HEK293 (cell line): ENCODE measurements at regions of chr6 and their contacts with region 1.

Region 1: DNA sequence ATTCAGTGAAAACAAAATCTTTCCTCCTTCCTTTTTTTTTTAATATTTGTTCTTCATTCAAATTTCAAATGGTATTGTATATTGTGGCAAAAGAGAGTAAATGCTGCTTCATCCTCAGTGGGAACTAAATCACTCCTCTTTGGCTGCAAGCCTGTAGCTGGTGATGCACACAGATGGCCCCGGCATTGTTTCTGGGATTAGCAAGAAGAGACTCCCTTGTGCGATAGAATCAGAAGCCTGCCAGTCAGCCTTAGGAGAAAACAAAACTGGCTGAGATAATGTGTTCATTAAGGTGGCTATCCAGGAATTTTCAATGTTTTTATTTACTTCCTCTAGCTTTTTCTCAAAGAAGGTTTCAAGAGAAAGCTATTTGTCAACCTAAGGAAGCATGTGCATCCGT is 20.7 kb upstream of the ELOVL2 start:
- H3K4me3 ChIP-seq: no peak overlapping the region
- H3K27ac ChIP-seq: no peak overlapping the region
- H3K4me1 ChIP-seq: 0 out of 2 replicates have a peak, but pooled peaks cover 2% of the 10 kb centered on the region
- CTCF ChIP-seq: no peak

Region 2: DNA sequence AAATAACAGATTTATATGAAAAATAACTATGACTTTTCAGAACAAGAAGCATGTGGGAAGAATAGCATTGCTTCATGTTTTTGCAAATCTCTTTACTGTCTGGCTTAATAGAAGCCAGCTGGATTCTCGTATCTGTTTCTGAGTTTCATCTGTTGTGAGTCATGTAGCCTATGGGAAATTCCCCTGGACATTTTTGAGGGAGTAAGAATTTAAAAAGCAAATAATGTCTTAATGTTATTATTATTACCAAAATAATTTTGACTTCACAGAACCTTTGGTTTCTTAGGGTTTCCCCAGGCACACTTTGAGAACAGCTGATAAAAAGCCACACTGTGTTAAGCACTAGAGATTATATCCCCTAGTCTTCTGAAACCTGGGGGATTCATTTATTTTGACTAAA is 102.2 kb before region 1 on chr6:
- CTCF ChIA-PET with region 1: interaction called, 11 read pairs
- POLR2A ChIA-PET with region 1: no interaction called
- H3K4me3 ChIP-seq: no peak overlapping the region
- H3K27ac ChIP-seq: no peak overlapping the region
- H3K4me1 ChIP-seq: no peaks in the 10 kb centered on the region
- CTCF ChIP-seq: no peak

Region 3: DNA sequence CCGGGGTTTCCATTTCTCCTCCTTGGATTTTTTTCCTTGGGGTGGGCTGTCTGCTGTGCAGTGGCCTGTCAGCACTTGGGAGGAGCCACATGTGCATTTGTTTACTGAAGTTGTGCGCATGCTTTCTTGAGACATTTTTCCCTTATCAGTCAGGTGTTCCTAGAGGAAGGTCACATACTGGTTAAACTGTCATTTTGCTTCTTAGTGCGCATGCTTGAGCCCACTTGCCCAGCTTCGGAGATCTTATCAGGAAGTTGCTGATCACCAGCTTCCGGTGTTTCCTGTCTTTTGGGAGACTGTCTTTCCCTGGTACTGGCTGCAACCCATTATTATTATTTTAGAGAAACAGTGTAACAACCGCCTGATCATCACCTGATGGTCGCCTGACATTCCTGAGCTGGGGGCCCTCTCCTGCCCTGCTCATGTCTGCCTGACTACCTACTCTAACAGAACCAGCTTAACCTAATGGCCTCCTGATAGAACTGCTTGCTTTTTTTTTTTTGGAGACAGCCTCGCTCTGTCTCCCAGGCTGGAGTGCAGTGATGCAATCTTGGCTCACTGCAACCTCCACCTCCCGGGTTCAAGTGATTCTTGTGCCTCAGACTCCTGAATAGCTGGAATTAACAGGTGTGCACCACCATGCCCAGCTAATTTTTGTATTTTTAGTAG is 47.1 kb after region 1 on chr6:
- CTCF ChIA-PET with region 1: no interaction called
- POLR2A ChIA-PET with region 1: no interaction called
- H3K4me3 ChIP-seq: no peak overlapping the region
- H3K27ac ChIP-seq: no peak overlapping the region
- H3K4me1 ChIP-seq: peaks cover 4% of the 10 kb centered on the region; the same call in 1 of the 2 replicates
- CTCF ChIP-seq: no peak